GM10248 (cell line): ENCODE measurements at regions of chr7 and their contacts with region 1.

Region 1: DNA sequence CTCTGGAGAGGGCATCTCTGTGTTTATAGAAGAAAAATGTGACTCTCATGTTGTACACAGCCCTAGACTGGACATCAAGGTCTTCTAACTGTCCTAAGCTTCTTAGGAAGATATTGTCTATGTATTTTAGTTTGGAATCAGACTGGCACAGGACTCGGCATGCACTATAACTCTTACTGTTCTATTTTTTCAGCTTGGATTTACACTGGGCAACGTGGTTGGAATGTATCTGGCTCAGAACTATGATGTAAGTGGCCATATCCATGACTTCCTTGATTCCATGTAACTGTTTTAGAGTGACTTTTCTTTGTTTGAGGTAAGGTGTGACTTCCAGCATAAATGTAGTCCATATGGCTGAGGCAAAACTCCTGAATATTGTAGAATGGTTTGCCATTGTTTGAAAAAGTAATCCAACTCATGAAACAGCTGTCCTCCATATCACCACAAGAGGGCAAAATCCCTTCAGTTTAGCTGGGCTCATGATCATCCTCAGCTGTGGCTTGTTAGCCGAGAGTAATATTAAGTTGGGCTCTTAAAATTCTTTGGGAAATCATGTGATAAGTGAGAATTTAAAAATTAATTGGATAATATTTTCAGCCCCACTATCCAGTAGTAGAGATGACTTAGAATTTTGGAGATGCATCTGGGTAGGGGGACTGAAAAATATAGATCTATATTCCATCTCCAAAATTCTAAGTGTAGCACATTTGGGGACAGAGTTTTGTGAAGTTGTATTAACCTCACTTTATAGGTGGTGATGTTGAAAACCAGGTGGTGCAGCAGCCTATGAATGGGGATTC is 10.4 kb downstream of the STMP1 start:
- DNase-seq: peak; percentile 45
- CTCF ChIP-seq: peak; percentile 58

Region 2: DNA sequence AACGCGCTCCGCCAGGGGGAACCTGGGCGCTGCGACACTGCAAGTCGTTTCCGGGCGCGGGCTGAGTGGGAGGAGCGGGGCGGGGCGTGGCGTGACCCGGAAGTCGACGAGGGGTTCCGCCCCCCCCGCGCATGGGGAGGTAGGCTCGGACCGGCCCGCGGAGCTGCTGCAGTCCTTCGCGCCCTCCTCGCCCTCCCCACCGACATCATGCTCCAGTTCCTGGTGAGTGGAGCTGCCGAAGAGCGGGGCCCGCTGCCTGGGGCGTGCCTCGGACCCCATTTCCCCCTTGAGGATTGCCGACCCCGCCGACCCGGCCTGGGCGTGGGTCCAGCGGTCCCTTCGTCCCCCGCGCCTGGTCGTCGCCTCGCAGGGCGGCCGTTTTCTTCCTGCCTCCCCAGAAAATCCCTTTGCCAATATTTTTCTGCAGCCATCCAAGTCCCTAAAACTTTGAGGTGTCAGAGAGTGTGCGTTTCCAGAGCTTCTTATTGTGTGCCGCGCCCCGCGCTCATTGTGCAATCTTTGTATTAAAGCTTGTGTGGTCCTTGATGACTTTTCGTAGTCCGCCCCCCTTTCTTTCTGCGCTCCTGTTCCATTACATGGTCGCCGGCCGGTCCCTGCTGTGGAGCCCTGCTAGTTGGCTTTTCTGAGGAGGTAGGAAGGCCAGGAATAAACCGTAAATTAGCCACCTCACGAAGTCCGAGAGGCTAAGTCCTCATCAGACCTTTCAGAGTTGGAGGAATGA is 10.2 kb before region 1 on chr7 and contains the start of gene STMP1:
- CTCF ChIA-PET with region 1: interaction called, 91 read pairs
- POLR2A ChIA-PET with region 1: no interaction called
- DNase-seq: peak; percentile 97
- CTCF ChIP-seq: peak; percentile 78

Region 3: GRCh38 chr7:135684136-135684535 is 11.4 kb after region 1 on chr7:
- CTCF ChIA-PET with region 1: interaction called, 61 read pairs
- POLR2A ChIA-PET with region 1: no interaction called
- DNase-seq: no peak
- CTCF ChIP-seq: no peak